ENCODE measurements at regions of chr11 and their contacts with region 1.

Region 1: DNA sequence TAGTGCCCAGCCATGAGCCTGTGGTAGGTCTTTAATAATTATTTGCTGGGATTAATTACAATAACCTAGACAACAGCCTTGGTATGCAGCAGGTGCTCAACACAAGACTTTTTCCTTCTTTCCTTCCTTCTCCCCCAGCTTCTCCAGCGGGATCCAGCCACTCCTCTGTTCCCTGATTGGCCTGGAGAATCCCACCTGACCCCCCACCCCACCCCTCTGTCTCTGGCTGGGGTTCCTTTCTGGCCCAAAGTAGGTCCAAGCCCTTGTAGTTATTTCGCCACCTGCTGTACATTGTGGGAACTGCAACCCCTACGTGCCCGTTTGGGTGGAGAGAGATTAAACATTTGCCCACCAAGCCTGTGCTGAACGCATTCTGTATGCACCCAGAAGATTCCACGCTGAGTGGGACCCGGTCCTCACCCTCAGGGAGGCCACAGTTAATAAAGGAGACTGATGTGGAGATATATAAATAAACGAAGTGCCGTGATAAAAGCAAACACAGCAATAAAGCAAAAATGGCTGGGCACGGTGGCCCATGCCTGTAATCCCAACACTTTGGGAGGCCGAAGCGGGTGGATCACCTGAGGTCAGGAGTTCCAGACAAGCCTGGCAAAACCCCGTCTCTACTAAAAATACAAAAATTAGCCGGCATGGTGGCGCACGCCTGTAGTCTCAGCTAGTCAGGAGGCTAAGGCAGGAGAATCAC is 32.1 kb upstream of the DGKZ start:
- DNase-seq: peak; percentile 72
- H3K4me3 ChIP-seq: no peak overlapping the region
- H3K27ac ChIP-seq: no peak overlapping the region
- H3K4me1 ChIP-seq: peaks cover 8% of the 10 kb centered on the region
- H3K27me3 ChIP-seq: no peaks in the 10 kb centered on the region
- CTCF ChIP-seq: peak; percentile 76 to 86
- POLR2A ChIP-seq: no peak

Region 2: DNA sequence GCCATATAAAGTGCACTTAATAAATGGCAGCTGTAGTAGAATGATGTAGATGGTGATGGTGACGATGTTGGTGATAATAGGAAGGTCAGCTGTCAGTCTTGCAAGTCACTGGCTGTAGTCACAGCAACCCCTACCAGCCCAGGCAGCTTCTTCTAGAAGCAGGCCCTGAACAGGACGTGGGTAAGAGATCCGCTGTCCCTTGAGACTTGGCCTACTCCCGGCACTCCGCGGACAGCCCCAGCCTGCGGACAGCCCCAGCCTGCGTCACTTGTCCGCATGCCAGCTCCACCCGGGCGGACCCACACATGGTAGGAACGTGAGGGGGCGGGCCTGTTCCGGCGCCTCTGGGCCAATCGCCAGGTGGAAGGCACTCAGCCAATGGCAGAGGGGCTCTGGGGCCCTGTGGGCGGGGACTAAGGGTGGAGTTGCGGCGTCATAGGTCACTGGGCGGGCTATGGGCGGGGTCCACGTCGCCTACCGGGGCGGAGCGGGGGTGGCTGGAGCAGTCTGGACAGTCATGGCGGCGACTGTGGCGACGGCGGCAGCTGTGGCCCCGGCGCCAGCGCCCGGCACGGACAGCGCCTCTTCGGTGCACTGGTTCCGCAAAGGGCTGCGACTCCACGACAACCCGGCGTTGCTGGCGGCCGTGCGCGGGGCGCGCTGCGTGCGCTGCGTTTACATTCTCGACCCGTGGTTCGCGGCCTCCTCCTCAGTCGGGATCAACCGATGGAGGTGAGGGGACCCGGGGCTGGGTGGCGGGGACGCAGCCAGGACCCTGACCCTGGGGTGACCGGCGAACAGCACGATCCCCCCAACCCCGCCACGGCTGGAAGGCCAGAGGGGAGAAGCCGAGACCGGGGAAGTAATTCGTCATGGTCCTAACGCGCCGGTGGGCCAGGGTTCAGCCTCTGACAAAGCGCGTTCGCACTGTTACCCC is 467.9 kb before region 1 on chr11 and contains the start of gene CRY2:
- CTCF ChIA-PET with region 1: no interaction called
- POLR2A ChIA-PET with region 1: no interaction called
- dilution Hi-C with region 1: no loop called
- intact Hi-C with region 1: loop called (anchors 10 kb)
- DNase-seq: peak; percentile 98
- H3K4me3 ChIP-seq: peak within 1 kb of the TSS; percentile 39 to 81 (median 68)
- H3K27ac ChIP-seq: peak within 1 kb of the TSS; percentile 63
- H3K4me1 ChIP-seq: peaks cover 13% of the 10 kb centered on the region
- H3K27me3 ChIP-seq: peaks cover 7 to 12% of the 10 kb centered on the region in 2 experiments
- CTCF ChIP-seq: no peak
- POLR2A ChIP-seq: peak; percentile 81
- total RNA-seq, gene CRY2: 8.8 and 11.7 TPM in 2 replicates

Region 3: DNA sequence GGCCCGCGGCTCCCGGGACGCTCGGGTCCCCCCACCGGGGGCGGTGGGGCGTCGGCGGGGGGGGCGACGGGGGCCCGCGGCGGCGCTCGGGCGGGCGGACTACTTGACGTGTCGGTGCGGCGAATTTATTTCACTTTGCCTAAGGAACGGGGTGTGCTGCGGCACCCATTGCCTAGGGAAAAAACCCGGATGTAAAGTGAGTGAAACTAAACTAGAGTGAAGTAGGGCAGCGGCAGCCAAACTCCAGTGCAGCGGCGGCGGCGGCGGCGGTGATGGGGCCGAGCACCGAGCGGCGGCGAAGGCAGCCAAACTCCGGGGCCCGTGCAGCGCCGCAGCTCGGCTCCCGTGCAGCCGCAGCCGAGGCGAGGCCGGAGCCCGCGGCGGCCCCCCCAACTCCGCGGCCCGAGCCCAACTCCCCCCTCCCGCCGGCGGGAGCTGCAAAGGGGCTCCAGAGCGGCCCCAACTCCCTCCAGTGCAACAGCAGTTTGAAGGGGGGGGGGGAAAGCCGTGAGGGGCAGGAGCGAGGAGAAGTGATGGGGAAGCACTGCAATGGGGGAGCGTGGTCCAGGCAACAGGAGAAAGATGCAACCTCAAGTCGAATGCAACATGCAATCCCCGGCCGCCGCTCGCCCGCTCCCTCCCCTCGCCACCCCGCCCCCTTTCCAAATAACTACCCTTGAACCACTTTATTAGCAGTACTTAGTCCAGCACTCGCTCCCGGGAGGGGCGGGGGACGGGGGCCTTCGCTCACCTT is 193.3 kb before region 1 on chr11:
- CTCF ChIA-PET with region 1: no interaction called
- POLR2A ChIA-PET with region 1: no interaction called
- dilution Hi-C with region 1: no loop called
- intact Hi-C with region 1: loop called (anchors 5 kb)
- DNase-seq: peak; percentile 78
- H3K4me3 ChIP-seq: peak overlapping the region; percentile 87 to 95 (median 92)
- H3K27ac ChIP-seq: peak overlapping the region; percentile 20
- H3K4me1 ChIP-seq: peaks cover 14% of the 10 kb centered on the region
- H3K27me3 ChIP-seq: no peaks in the 10 kb centered on the region
- CTCF ChIP-seq: no peak
- POLR2A ChIP-seq: peak; percentile 20

Region 4: DNA sequence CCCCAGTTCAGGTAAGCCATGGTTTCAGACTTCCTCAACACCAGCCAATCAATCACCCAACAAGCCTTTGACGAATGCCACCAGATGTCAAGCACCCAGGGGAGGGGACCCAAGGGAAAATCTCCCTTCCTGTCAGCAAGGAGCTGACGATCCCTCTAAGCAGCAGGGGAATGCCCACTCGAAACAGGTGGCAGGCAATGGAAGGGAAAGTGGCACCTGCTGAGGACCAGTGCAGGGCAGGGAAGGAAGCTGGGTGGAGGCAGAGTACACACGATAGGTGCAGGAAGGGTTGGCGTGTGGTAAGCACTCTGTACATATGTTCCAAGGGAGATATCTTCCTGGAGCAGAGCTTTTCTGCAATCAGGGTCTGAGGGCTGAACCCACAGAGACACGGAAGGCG is 49.4 kb before region 1 on chr11:
- CTCF ChIA-PET with region 1: no interaction called
- POLR2A ChIA-PET with region 1: no interaction called
- dilution Hi-C with region 1: no loop called
- intact Hi-C with region 1: no loop called
- DNase-seq: no peak
- H3K4me3 ChIP-seq: no peak overlapping the region
- H3K27ac ChIP-seq: no peak overlapping the region
- H3K4me1 ChIP-seq: no peaks in the 10 kb centered on the region
- H3K27me3 ChIP-seq: peaks cover 0 to 3% of the 10 kb centered on the region in 2 experiments
- CTCF ChIP-seq: no peak
- POLR2A ChIP-seq: no peak

Region 5: DNA sequence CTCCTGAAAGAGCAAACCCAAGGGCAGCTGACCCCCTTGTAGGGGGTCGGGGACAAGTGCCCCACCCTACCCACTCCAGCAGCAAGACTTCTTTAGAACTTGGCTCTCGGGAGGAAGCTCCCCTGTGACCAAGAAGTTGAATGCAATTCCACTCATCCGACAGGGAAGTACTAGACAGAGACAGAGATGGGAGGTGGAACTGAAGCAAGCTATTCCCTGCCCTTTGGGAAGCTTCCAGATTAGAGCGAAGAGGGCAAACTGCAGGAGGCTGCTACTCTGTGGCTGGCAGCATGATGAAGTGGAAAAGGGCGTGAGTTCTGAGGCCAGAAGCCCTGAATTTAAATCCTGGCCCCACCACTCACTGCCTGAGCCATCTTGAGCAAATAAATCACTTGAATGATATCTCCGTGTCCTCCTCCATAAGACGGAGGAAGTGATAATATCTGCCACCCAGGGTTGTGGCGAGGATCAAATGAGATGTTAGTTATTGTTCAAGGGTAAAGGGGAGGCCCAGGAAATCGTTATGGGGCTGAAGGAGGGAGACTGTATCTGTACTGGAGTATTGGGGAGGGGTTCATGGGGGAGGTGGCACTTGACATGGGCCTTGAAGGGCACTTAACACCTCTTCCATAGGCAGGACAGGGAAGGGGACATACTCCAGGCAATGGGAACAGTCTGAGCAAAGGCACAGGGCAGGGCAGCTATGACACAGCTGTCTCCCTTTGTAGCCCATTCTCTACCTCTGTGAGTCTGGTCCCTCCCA is 15.9 kb after region 1 on chr11:
- CTCF ChIA-PET with region 1: interaction called, 30 read pairs
- POLR2A ChIA-PET with region 1: no interaction called
- dilution Hi-C with region 1: no loop called
- intact Hi-C with region 1: no loop called
- DNase-seq: no peak
- H3K4me3 ChIP-seq: no peak overlapping the region
- H3K27ac ChIP-seq: no peak overlapping the region
- H3K4me1 ChIP-seq: no peaks in the 10 kb centered on the region
- H3K27me3 ChIP-seq: peaks cover 46 to 51% of the 10 kb centered on the region in 2 experiments
- CTCF ChIP-seq: no peak
- POLR2A ChIP-seq: no peak

Region 6: GRCh38 chr11:46346886-46347636 is 31.9 kb after region 1 on chr11 and contains the start of gene DGKZ:
- CTCF ChIA-PET with region 1: interaction called, 7 read pairs
- POLR2A ChIA-PET with region 1: no interaction called
- dilution Hi-C with region 1: no loop called
- intact Hi-C with region 1: loop called (anchors 1 kb)
- DNase-seq: peak; percentile 84
- H3K4me3 ChIP-seq: peak within 1 kb of the TSS; percentile 32 to 73 (median 61)
- H3K27ac ChIP-seq: peak within 1 kb of the TSS; percentile 19
- H3K4me1 ChIP-seq: peaks cover 40% of the 10 kb centered on the region
- H3K27me3 ChIP-seq: no peaks in the 10 kb centered on the region
- CTCF ChIP-seq: peak; percentile 61 to 90
- POLR2A ChIP-seq: peak; percentile 56
- total RNA-seq, gene DGKZ: 87.1 and 88.8 TPM in 2 replicates

Measured in endothelial cell of umbilical vein (primary cell).